Activated B cell treated with CpG ODN at 0.5 μM for 24 hours (primary cell): ENCODE measurements at regions of chr7 and their contacts with region 1.

Region 1: DNA sequence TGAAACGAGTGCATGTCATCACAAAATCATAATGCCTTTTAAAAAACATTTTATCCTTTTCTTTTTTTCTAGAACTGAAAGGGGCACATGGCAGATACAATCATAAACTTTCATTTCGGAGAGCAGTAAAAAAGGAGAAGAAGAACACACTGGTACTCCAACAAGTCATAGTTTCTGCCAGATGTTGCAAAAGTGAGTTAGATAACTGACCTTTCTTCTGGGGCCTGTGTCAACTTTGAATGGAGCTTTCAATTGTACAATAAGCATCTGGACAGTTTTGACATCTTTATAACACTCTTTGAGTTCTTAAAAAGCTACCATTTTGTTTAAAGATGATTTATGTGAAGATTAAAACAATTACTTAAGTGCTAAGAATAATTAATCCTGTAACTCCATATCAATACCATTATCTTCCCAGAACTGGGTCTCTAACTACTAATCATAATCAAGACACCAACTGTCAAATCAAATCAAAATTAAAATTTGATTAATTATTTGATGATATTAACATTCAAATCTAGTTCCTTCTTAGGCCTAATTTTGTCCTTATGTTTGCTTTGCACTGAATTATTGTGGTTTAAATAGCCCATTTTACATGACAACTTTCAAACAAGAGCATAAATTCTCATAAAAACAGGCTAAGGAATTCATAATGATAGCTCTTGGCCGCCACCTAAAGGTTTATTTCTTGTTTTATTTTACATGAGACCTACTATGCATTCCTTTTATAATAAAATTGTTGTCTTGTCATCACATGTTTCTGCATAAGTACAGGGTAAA is 19.5 kb upstream of the ITGB8 start:
- DNase-seq: no peak
- ATAC-seq: peak; percentile 37
- H3K4me3 Mint-ChIP-seq: no peak overlapping the region
- H3K27ac Mint-ChIP-seq: peak overlapping the region; percentile 64
- H3K4me1 Mint-ChIP-seq: peaks cover 16% of the 10 kb centered on the region
- H3K27me3 Mint-ChIP-seq: no peaks in the 10 kb centered on the region
- CTCF ChIP-seq: peak; percentile 31

Region 2: DNA sequence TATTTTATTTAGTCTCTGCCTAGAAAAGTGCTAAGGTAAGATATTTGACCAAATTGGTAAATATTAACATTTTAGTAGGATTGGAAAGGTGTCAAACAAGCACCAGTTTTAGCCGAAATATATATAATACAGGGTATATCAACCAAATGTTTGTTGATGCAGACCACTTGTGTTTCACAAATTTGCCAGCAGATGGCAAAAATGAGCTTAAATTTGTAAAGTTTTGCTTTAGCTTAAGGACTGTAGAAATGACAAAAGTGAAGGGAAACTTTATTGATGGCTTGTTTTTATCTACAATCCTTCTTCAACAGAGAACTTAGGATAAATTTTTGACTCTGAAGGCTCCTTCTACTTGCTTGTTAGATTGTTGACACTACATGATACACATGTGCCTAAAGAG is 597.5 kb before region 1 on chr7:
- CTCF ChIA-PET with region 1: interaction called, 13 read pairs
- POLR2A ChIA-PET with region 1: no interaction called
- intact Hi-C with region 1: loop called (anchors 1 kb)
- DNase-seq: no peak
- ATAC-seq: no peak
- H3K4me3 Mint-ChIP-seq: no peak overlapping the region
- H3K27ac Mint-ChIP-seq: no peak overlapping the region
- H3K4me1 Mint-ChIP-seq: peaks cover 14% of the 10 kb centered on the region
- H3K27me3 Mint-ChIP-seq: peaks cover 9% of the 10 kb centered on the region
- CTCF ChIP-seq: no peak

Region 3: GRCh38 chr7:19747740-19748339 is 563.3 kb before region 1 on chr7:
- CTCF ChIA-PET with region 1: interaction called, 8 read pairs
- POLR2A ChIA-PET with region 1: no interaction called
- intact Hi-C with region 1: loop called (anchors 1 kb)
- DNase-seq: no peak
- ATAC-seq: peak; percentile 25
- H3K4me3 Mint-ChIP-seq: no peak overlapping the region
- H3K27ac Mint-ChIP-seq: no peak overlapping the region
- H3K4me1 Mint-ChIP-seq: no peaks in the 10 kb centered on the region
- H3K27me3 Mint-ChIP-seq: peaks cover 6% of the 10 kb centered on the region
- CTCF ChIP-seq: no peak

Region 4: DNA sequence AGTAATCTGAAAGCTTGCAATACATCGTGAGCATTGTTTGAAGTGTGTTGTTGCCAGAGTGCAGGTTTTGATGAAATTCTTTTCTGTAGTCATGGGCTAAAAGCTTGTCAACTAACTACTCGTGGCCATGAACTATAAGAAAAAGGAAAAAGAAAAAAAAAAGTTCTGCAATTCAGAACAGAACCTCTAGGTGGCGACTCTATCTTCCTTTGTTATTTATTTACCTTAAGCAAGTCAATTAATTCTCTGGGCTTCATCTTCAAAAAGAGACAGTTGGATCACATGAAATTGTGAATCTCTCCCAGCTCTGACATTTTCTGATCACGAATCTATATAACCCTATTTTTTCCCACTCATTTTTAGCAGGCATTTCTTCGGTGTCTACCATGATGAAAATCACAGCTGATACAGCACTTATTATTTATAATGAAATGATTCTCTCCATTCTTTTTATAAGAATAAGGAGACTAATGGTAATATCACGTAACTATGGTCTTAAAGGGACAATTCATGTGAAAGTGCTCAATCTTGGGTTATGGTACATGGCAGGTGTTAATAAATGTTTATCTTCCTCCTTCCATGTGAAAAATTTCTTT is 556.5 kb before region 1 on chr7:
- CTCF ChIA-PET with region 1: interaction called, 16 read pairs
- POLR2A ChIA-PET with region 1: no interaction called
- intact Hi-C with region 1: loop called (anchors 1 kb)
- DNase-seq: no peak
- ATAC-seq: peak; percentile 42
- H3K4me3 Mint-ChIP-seq: no peak overlapping the region
- H3K27ac Mint-ChIP-seq: no peak overlapping the region
- H3K4me1 Mint-ChIP-seq: no peaks in the 10 kb centered on the region
- H3K27me3 Mint-ChIP-seq: no peaks in the 10 kb centered on the region
- CTCF ChIP-seq: no peak

Region 5: GRCh38 chr7:20158684-20159083 is 152.5 kb before region 1 on chr7:
- CTCF ChIA-PET with region 1: interaction called, 16 read pairs
- POLR2A ChIA-PET with region 1: no interaction called
- intact Hi-C with region 1: loop called (anchors 1 kb)
- DNase-seq: no peak
- ATAC-seq: no peak
- H3K4me3 Mint-ChIP-seq: no peak overlapping the region
- H3K27ac Mint-ChIP-seq: no peak overlapping the region
- H3K4me1 Mint-ChIP-seq: peaks cover 16% of the 10 kb centered on the region
- H3K27me3 Mint-ChIP-seq: no peaks in the 10 kb centered on the region
- CTCF ChIP-seq: no peak

Region 6: GRCh38 chr7:20172736-20173334 is 138.3 kb before region 1 on chr7:
- CTCF ChIA-PET with region 1: interaction called, 28 read pairs
- POLR2A ChIA-PET with region 1: no interaction called
- intact Hi-C with region 1: loop called (anchors 5 kb)
- DNase-seq: peak; percentile 27
- ATAC-seq: peak; percentile 61
- H3K4me3 Mint-ChIP-seq: no peak overlapping the region
- H3K27ac Mint-ChIP-seq: no peak overlapping the region
- H3K4me1 Mint-ChIP-seq: peaks cover 11% of the 10 kb centered on the region
- H3K27me3 Mint-ChIP-seq: no peaks in the 10 kb centered on the region
- CTCF ChIP-seq: no peak